K562 (cell line): ENCODE measurements at regions of chr16 and their contacts with region 1.

Region 1: DNA sequence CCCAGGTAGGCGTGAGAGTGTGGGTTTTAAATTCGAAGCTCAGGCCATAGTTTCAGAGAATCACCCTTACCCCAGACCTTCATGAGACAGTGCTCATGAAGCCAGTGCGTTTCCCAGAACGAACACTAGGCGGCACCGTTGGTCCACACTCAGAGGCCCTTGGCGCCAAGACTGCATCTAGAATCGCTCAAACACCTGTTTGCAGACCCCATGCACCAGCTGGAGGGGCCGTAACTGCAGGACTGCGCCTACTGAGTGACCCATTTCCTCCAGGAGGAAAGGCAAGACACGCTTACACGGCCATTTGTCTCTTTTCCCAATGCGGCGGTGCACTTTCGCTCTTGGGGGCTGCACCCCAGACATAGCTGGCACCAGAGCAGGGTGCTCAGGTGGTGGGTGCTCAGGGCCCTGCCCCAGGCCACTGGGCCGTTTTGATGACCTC is 34.0 kb downstream of the ADGRG5 start:
- DNase-seq: peak; percentile 71 to 84 (median 77)
- ATAC-seq: peak; percentile 94
- H3K4me3 ChIP-seq: no peak overlapping the region
- H3K27ac ChIP-seq: no peak overlapping the region
- H3K4me1 ChIP-seq: peaks cover 0 to 16% of the 10 kb centered on the region in 2 experiments; a peak in 3 of 5 replicates
- H3K27me3 ChIP-seq: peaks cover 5 to 46% of the 10 kb centered on the region in 2 experiments; a peak in 4 of 5 replicates
- CTCF ChIP-seq: peak; percentile 92 to 98 (median 94)
- EP300 ChIP-seq: no peak
- POLR2A ChIP-seq: no peak
- RAD21 ChIP-seq: peak; percentile 86 to 93

Region 2: DNA sequence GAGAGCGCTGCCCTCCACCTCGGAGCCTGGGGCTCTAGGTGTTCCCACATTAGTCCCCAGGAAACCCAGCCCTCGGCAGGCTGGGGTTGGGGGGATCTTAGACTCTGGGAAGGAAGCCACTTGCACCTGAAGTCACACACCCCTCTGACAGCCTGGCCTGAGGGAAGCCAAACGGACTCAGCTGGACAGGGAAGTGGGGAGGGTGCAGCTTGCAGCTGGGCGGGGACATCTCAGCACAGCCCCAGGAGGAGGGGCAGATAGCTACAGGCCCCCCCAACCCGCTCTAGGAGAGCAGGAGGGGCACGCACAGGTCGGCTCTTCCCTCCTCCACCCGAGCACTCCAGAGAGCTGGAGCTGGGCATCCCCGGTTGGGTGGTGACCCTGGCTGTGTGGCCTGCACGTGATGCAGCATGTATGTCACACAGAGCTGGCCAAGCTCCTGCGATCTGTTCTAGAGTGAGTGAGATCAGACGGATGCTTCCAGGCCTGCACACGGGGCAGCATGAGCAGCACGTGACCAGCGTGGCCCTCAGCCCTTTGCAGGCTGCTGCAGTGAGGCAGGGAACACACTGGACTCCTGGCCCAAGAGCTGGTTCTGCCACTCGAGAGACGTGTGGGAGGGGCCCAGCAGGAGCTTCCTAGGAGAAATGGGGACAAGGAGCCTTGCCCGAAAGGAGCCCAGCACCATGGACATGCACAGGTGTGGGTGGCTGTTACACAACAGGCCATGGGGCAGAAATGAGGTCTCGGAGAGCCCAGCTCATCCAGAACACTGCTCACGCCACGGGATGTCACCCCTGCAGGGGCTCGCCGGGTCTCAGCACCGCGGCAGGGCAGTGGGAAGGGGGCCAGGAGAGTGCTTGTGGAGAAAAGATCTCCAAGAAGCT is 210.4 kb after region 1 on chr16:
- CTCF ChIA-PET with region 1: no interaction called
- POLR2A ChIA-PET with region 1: no interaction called
- in situ Hi-C with region 1: no loop called
- intact Hi-C with region 1: no loop called
- DNase-seq: no peak
- ATAC-seq: peak; percentile 60
- H3K4me3 ChIP-seq: no peak overlapping the region
- H3K27ac ChIP-seq: no peak overlapping the region
- H3K4me1 ChIP-seq: peaks cover 0 to 23% of the 10 kb centered on the region in 2 experiments; a peak in 1 of 5 replicates
- H3K27me3 ChIP-seq: no peaks in the 10 kb centered on the region
- CTCF ChIP-seq: no peak
- EP300 ChIP-seq: no peak
- POLR2A ChIP-seq: no peak
- RAD21 ChIP-seq: no peak

Region 3: GRCh38 chr16:58098207-58099096 is 522.0 kb after region 1 on chr16:
- CTCF ChIA-PET with region 1: no interaction called
- POLR2A ChIA-PET with region 1: no interaction called
- in situ Hi-C with region 1: no loop called
- intact Hi-C with region 1: loop called (anchors 10 kb)
- DNase-seq: no peak
- ATAC-seq: no peak
- H3K4me3 ChIP-seq: no peak overlapping the region
- H3K27ac ChIP-seq: no peak overlapping the region
- H3K4me1 ChIP-seq: peaks cover 0 to 8% of the 10 kb centered on the region in 2 experiments; a peak in 2 of 5 replicates
- H3K27me3 ChIP-seq: peaks cover 4 to 13% of the 10 kb centered on the region in 2 experiments; a peak in 3 of 5 replicates
- CTCF ChIP-seq: no peak
- EP300 ChIP-seq: no peak
- POLR2A ChIP-seq: no peak
- RAD21 ChIP-seq: no peak